Dorsolateral prefrontal cortex (tissue), 120 donors: ENCODE measurements at regions of chr13 and their contacts with region 1.

Region 1: GRCh38 chr13:94435604-94436226 is 43.8 kb downstream of the DCT start:
- DNase-seq: no peak
- H3K4me3 ChIP-seq: no peak overlapping the region
- H3K27ac ChIP-seq: no peak overlapping the region
- H3K27me3 ChIP-seq: no peaks in the 10 kb centered on the region
- CTCF ChIP-seq: peak; percentile 55 to 88 (median 74)

Region 2: DNA sequence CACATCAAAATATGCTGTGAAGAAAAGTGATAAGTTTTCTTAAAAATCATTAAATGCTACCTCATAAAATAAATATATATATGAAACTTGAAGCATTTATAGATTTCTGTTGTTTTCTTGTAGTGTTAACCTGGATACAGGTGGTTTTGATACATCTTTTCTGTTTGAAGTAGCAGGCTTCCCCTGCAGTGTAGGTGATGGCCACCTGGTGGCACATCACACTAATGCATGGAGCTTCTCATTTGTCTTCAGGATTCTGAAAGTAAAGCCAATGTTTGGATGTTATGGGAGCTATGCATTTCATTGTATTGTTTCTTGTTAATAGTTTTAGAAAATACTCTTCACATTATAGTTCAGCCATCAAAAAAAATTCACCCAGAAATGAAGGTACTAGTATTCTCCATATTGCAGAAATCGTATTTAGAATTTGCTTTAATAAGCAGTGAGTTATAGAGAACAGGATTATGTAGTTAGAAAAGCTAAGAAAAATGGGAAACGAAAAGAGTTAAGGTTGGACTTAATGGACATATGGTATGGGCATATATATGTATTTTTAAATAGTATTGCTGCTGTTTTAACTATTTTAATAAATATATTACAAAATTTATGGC is 184.7 kb after region 1 on chr13:
- intact Hi-C with region 1: loop called (anchors 2 to 5 kb)
- DNase-seq: no peak
- H3K4me3 ChIP-seq: no peak overlapping the region
- H3K27ac ChIP-seq: no peak overlapping the region
- H3K27me3 ChIP-seq: no peaks in the 10 kb centered on the region
- CTCF ChIP-seq: peak; percentile 39 to 69 (median 57)